HepG2 (cell line): ENCODE measurements at regions of chr17 and their contacts with region 1.

Region 1: GRCh38 chr17:64129764-64130558 is at the start of gene ERN1:
- DNase-seq: peak; percentile 82
- ATAC-seq: peak; percentile 95
- H3K4me3 ChIP-seq: peak within 1 kb of the TSS; percentile 79 to 96 (median 89)
- H3K27ac ChIP-seq: peak within 1 kb of the TSS; percentile 81
- H3K4me1 ChIP-seq: peaks cover 84% of the 10 kb centered on the region
- H3K27me3 ChIP-seq: no peaks in the 10 kb centered on the region; a peak in 1 of 5 replicates
- CTCF ChIP-seq: peak; percentile 40
- EP300 ChIP-seq: 0 out of 4 replicates have a peak, but pooled peaks of 1 of the 2 experiments have one; percentile 6
- POLR2A ChIP-seq: peak; percentile 94 to 99
- RAD21 ChIP-seq: peak; percentile 62
- total RNA-seq, gene ERN1: 4.1 and 6.0 TPM in 2 replicates

Region 2: GRCh38 chr17:63919311-63919723 is 210.6 kb before region 1 on chr17:
- CTCF ChIA-PET with region 1: interaction called, 3 read pairs
- POLR2A ChIA-PET with region 1: no interaction called
- in situ Hi-C with region 1: loop called (anchors 10 kb)
- intact Hi-C with region 1: loop called (anchors 10 kb)
- DNase-seq: peak; percentile 44
- ATAC-seq: peak; percentile 92
- H3K4me3 ChIP-seq: no peak overlapping the region
- H3K27ac ChIP-seq: no peak overlapping the region
- H3K4me1 ChIP-seq: peaks cover 16% of the 10 kb centered on the region
- H3K27me3 ChIP-seq: peaks cover under 1 to 24% of the 10 kb centered on the region in 2 experiments; a peak in 3 of 5 replicates
- CTCF ChIP-seq: peak; percentile 94
- EP300 ChIP-seq: no peak
- POLR2A ChIP-seq: no peak
- RAD21 ChIP-seq: peak; percentile 90

Region 3: GRCh38 chr17:64025732-64026294 is 104.1 kb before region 1 on chr17:
- CTCF ChIA-PET with region 1: interaction called, 48 read pairs
- POLR2A ChIA-PET with region 1: interaction called, 29 read pairs
- in situ Hi-C with region 1: loop called (anchors 5 kb)
- intact Hi-C with region 1: loop called (anchors 1 kb)
- DNase-seq: peak; percentile 82
- ATAC-seq: peak; percentile 89
- H3K4me3 ChIP-seq: peak overlapping the region in 1 of 3 experiments; percentile 47; a peak in 4 of 6 replicates
- H3K27ac ChIP-seq: no peak overlapping the region
- H3K4me1 ChIP-seq: peaks cover 52% of the 10 kb centered on the region
- H3K27me3 ChIP-seq: no peaks in the 10 kb centered on the region
- CTCF ChIP-seq: peak; percentile 99
- EP300 ChIP-seq: peak in 1 of 2 experiments; percentile 42; a peak in 1 of 4 replicates
- POLR2A ChIP-seq: no peak
- RAD21 ChIP-seq: peak; percentile 66; the same call in 1 of the 2 replicates

Region 4: GRCh38 chr17:64073771-64074703 is 55.9 kb before region 1 on chr17:
- CTCF ChIA-PET with region 1: no interaction called
- POLR2A ChIA-PET with region 1: interaction called, 58 read pairs
- in situ Hi-C with region 1: no loop called
- intact Hi-C with region 1: no loop called
- DNase-seq: no peak
- ATAC-seq: peak; percentile 34; the same call in 2 of the 3 replicates
- H3K4me3 ChIP-seq: peak overlapping the region in 1 of 3 experiments; percentile 44; a peak in 1 of 6 replicates
- H3K27ac ChIP-seq: peak overlapping the region; percentile 58
- H3K4me1 ChIP-seq: peaks cover 40% of the 10 kb centered on the region
- H3K27me3 ChIP-seq: no peaks in the 10 kb centered on the region
- CTCF ChIP-seq: no peak
- EP300 ChIP-seq: no peak
- POLR2A ChIP-seq: no peak
- RAD21 ChIP-seq: no peak

Region 5: GRCh38 chr17:64174686-64175456 is 44.9 kb after region 1 on chr17:
- CTCF ChIA-PET with region 1: no interaction called
- POLR2A ChIA-PET with region 1: no interaction called
- in situ Hi-C with region 1: no loop called
- intact Hi-C with region 1: no loop called
- DNase-seq: no peak
- ATAC-seq: no peak
- H3K4me3 ChIP-seq: no peak overlapping the region
- H3K27ac ChIP-seq: no peak overlapping the region
- H3K4me1 ChIP-seq: peaks cover 37% of the 10 kb centered on the region
- H3K27me3 ChIP-seq: no peaks in the 10 kb centered on the region
- CTCF ChIP-seq: no peak
- EP300 ChIP-seq: no peak
- POLR2A ChIP-seq: no peak
- RAD21 ChIP-seq: no peak

Region 6: DNA sequence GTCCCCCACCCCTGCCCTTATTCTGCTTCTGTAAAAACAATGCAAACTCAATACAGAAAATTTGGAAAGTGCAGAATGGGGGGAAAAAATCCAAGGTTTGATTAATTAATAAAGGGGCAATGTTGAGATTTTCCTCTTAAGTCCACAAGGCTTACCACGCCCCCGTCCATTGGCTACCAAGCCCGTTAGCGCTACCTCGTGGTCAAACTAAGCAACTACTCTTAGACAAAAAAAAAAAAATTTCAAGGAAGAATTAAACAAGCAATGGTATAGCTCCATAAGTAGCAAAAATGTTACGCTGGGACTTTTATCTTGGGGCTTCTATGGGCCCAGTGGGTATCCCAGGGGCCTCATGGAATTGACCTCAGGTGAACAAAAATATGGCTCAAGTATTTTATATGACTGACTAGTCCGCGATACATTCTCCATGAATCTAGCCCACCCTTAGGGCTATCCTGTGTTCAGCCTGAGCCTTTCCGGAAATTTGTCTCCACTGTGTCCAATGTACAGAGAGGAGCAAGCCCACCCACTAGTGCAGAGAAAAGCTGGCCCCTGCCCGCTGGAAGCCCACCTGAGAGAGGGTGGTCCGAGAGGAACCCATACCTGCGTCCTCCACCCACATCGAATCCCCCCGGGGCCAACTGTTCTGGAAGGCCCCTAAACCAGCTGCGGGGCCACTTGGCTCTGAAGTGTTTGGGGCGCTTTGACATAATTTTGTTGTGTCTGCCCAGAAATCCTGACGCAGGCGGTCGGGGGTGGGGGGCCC is 152.2 kb after region 1 on chr17:
- CTCF ChIA-PET with region 1: interaction called, 7 read pairs
- POLR2A ChIA-PET with region 1: no interaction called
- in situ Hi-C with region 1: no loop called
- intact Hi-C with region 1: loop called (anchors 5 kb)
- DNase-seq: peak; percentile 72
- ATAC-seq: peak; percentile 48
- H3K4me3 ChIP-seq: no peak overlapping the region
- H3K27ac ChIP-seq: no peak overlapping the region
- H3K4me1 ChIP-seq: peaks cover 31% of the 10 kb centered on the region
- H3K27me3 ChIP-seq: no peaks in the 10 kb centered on the region; a peak in 1 of 5 replicates
- CTCF ChIP-seq: peak; percentile 85
- EP300 ChIP-seq: no peak
- POLR2A ChIP-seq: no peak
- RAD21 ChIP-seq: peak; percentile 85